Ascending aorta (tissue), 2 donors: ENCODE measurements at regions of chr22 and their contacts with region 1.

Region 1: GRCh38 chr22:23849009-23850006 is 8.4 kb upstream of the SLC2A11 start:
- DNase-seq: peak in 1 of 2 donors; percentile 86
- H3K4me3 ChIP-seq: peak overlapping the region in 1 of 2 donors; percentile 12
- H3K27ac ChIP-seq: no peak overlapping the region
- H3K4me1 ChIP-seq: peaks cover 7% of the 10 kb centered on the region in 2 donors
- H3K27me3 ChIP-seq: no peaks in the 10 kb centered on the region
- CTCF ChIP-seq: peak; percentile 95 to 99 (median 99)

Region 2: DNA sequence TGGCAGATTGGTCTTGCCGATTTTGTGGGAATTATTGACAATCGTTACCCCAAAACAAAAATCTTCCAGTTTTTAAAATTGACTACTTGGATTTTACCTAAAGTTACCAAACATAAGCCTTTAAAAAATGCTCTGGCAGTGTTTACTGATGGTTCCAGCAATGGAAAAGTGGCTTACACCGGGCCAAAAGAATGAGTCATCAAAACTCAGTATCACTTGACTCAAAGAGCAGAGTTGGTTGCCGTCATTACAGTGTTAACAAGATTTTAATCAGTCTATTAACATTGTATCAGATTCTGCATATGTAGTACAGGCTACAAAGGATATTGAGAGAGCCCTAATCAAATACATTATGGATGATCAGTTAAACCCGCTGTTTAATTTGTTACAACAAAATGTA is 306.4 kb before region 1 on chr22:
- intact Hi-C with region 1: loop called (anchors 5 kb)
- DNase-seq: no peak
- H3K4me3 ChIP-seq: no peak overlapping the region
- H3K27ac ChIP-seq: no peak overlapping the region
- H3K4me1 ChIP-seq: no peaks in the 10 kb centered on the region
- H3K27me3 ChIP-seq: no peaks in the 10 kb centered on the region
- CTCF ChIP-seq: no peak